Heart left ventricle (tissue), 16 donors: ENCODE measurements at regions of chr16 and their contacts with region 1.

Region 1: DNA sequence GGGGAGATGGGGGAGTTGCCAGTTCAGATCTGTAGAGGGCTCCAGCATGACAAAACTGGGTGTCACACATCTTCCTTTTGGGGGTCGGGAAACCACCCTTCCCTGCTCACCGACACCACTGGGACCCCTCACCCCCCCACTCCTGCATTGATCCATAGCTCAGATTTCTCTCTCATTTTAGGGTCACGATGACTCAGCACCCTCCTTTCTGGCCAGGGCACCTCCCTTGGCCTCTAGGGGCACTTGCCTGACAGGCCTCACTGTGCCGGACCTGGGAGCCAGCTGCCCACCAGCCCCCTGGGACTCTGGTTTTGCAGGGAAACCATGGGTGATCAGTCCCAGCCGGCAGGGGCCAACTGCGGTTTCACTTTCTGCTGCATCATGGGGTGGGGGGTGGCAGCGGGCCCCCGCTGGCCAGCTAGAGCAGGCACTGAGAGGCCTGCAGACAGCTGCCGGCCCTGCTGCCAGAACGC is 239.4 kb downstream of the MRTFB start:
- DNase-seq: peak in 1 of 5 donors; percentile 47
- ATAC-seq: no peak
- H3K4me3 ChIP-seq: no peak overlapping the region
- H3K27ac ChIP-seq: peak overlapping the region in 7 of 12 donors; percentile 5 to 75 (median 36)
- H3K4me1 ChIP-seq: peaks cover 0 to 59% (median 26%) of the 10 kb centered on the region in 12 donors
- H3K27me3 ChIP-seq: no peaks in the 10 kb centered on the region
- CTCF ChIP-seq: no peak
- POLR2A ChIP-seq: no peak

Region 2: DNA sequence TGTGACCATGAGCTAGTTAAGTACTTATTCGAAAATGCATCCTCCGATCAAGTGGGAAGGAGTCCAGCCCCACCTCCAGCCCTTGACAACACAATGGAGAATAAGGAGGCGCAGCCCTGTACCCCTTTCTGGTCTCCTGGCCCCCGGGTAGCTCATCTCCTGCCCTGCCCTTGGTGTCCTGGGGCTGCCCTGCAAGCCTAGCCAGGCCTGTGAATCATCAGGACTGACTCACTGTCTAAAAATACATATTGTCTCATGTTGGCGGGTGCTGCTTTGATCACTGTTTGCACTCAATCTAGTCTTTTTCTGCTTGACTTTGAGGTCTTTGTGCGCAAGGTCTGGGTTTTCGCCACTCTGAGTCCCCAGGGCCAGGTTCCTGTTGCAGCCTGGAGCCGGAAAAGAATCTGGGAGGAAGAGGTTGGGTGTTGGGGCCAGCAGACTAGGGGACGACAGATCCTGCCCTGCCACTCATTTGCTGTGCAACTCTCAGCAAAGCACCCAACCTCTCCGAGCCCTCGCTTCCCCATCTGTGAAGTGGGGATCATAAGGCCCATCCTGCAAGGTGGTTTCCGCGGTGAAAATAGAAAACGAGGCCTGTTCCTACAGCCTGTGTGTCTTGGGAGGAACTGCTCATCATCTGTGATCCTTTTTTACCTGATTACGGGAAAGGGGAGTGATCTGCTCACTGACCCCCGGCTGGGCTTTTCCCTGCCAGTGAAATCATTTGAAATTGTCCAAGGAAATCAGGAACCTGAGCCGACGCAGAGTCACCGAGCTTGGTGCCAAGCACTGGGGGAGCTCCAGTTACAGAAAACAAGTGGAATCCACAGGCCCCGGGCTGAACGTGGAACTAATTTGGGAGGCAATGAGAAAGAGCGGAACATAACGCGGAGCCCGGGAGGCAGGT is 89.1 kb after region 1 on chr16:
- intact Hi-C with region 1: loop called in 2 of 10 experiments (anchors 10 kb)
- DNase-seq: peak in 4 of 5 donors; percentile 31 to 65 (median 48)
- ATAC-seq: peak; percentile 92 to 95 (median 94)
- H3K4me3 ChIP-seq: no peak overlapping the region
- H3K27ac ChIP-seq: peak overlapping the region; percentile 55 to 83 (median 72)
- H3K4me1 ChIP-seq: peaks cover 0 to 18% (median 11%) of the 10 kb centered on the region in 12 donors
- H3K27me3 ChIP-seq: no peaks in the 10 kb centered on the region
- CTCF ChIP-seq: no peak
- POLR2A ChIP-seq: no peak

Region 3: GRCh38 chr16:14418795-14419225 is 108.3 kb after region 1 on chr16:
- intact Hi-C with region 1: loop called in 3 of 10 experiments (anchors 5 to 10 kb)
- DNase-seq: peak in 3 of 5 donors; percentile 23 to 64 (median 43)
- ATAC-seq: peak; percentile 87 to 90 (median 88)
- H3K4me3 ChIP-seq: peak overlapping the region in 3 of 12 donors; percentile 16 to 22 (median 20)
- H3K27ac ChIP-seq: peak overlapping the region; percentile 58 to 85 (median 69)
- H3K4me1 ChIP-seq: peaks cover 0 to 26% (median 9%) of the 10 kb centered on the region in 12 donors
- H3K27me3 ChIP-seq: no peaks in the 10 kb centered on the region
- CTCF ChIP-seq: no peak
- POLR2A ChIP-seq: no peak